ENCODE measurements at regions of chrX and their contacts with region 1.

Region 1: DNA sequence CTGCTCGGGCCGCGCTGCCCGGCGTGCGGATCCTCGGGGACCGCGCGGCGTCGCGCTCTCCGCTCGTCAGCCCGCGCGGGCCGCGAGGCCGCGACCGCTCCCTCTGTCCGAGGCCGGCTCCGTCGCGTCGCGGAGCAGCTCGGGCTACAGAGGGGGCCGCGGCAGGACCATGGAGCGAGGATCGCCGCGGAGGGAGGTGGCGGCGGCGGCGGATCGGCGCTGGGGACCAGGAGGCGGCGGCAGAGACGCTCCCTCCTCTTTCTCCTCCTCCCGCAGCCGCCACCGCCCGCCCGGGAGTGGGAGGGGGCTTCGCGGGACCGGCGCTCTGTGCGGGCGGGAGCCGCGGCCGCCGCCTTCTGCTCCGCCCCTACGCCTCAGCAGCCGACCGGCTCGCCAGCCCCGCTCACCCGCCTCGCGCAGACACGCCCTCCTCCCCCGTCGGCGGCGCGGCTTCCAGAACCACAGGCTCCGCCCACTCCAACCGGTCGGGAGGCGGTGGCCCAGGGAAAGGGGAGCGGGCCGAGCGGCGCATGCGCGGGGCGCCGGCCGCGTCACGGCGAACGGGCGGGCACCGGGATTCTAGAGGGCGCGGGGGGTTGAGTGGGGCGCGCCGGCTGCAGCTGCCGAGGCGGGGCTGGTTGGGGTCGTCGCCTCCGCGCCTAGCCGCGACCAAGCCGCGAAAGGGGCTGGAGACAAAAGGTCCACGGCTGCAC is at the start of gene CASK:
- DNase-seq: peak; percentile 97
- H3K4me3 Mint-ChIP-seq: peak within 1 kb of the TSS; percentile 88
- H3K27ac Mint-ChIP-seq: peak within 1 kb of the TSS; percentile 84
- H3K4me1 Mint-ChIP-seq: peaks cover 25% of the 10 kb centered on the region
- H3K27me3 Mint-ChIP-seq: peaks cover 2% of the 10 kb centered on the region
- total RNA-seq, gene CASK: 16.4 and 19.3 TPM in 2 replicates

Region 2: DNA sequence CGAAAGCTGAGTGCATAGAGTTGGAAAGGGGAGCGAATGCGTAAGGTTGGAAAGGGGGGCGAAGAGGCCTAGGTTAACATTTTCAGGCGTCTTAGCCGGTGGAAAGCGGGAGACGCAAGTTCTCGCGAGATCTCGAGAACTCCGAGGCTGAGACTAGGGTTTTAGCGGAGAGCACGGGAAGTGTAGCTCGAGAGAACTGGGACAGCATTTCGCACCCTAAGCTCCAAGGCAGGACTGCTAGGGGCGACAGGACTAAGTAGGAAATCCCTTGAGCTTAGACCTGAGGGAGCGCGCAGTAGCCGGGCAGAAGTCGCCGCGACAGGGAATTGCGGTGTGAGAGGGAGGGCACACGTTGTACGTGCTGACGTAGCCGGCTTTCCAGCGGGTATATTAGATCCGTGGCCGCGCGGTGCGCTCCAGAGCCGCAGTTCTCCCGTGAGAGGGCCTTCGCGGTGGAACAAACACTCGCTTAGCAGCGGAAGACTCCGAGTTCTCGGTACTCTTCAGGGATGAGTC is 589.6 kb before region 1 on chrX and contains the start of gene DDX3X:
- intact Hi-C with region 1: loop called (anchors 5 kb)
- DNase-seq: peak; percentile 95
- H3K4me3 Mint-ChIP-seq: peak within 1 kb of the TSS; percentile 98
- H3K27ac Mint-ChIP-seq: peak within 1 kb of the TSS; percentile 100
- H3K4me1 Mint-ChIP-seq: peaks cover 25% of the 10 kb centered on the region
- H3K27me3 Mint-ChIP-seq: no peaks in the 10 kb centered on the region
- total RNA-seq, gene DDX3X: 307 and 313 TPM in 2 replicates

Region 3: GRCh38 chrX:41664307-41665299 is 258.8 kb before region 1 on chrX:
- intact Hi-C with region 1: loop called (anchors 2 kb)
- DNase-seq: peak; percentile 55
- H3K4me3 Mint-ChIP-seq: peak overlapping the region; percentile 6
- H3K27ac Mint-ChIP-seq: peak overlapping the region; percentile 53
- H3K4me1 Mint-ChIP-seq: peaks cover 34% of the 10 kb centered on the region
- H3K27me3 Mint-ChIP-seq: no peaks in the 10 kb centered on the region

Region 4: GRCh38 chrX:41906515-41907165 is 16.8 kb before region 1 on chrX:
- intact Hi-C with region 1: loop called (anchors 2 kb)
- DNase-seq: no peak
- H3K4me3 Mint-ChIP-seq: no peak overlapping the region
- H3K27ac Mint-ChIP-seq: peak overlapping the region; percentile 65
- H3K4me1 Mint-ChIP-seq: peaks cover 18% of the 10 kb centered on the region
- H3K27me3 Mint-ChIP-seq: no peaks in the 10 kb centered on the region

Region 5: DNA sequence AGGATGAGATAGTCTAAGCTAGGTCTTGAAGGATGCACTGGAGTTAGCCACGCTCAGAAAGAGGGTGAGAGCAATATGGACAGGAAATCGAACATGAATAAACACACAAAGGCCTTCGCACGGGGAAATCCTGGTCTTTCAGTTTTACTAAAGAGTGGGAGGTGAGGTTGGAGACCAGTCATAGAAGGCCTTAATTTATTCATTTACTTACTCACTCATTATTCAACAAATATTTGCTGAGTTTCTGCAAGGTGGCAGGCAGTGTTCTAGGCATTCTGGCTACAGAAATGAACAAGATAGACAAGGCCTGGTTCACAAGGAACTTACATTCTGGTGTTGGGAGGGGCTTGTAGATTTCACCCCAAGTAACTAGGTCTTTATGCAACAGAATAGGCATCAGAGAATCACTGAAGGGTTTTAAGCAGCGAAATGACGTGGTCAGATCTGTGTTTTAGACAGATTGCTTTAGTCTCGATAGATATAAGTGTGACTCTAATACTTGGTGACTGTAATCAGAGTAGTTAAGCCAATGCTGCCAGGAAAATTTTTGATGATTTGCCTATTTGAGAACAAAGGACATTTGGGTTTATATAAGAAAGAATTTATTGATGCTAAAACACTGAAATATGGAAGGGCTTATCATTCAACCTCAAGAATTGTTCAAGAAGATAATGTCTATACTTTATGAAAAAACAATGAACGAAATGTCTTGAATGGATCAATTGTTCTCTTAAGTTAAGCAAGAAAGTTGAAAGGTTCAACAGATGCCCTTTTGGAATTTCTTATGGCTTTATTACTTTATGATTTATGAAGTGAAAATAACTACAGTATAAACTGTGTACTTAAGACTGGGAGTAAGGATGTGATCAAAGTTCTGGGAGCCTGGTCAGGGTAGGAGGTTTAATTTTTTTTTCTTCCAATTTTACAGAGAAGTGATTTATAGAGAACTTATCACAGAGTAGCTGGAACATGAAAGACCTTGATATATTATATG is 184.4 kb after region 1 on chrX:
- intact Hi-C with region 1: loop called (anchors 5 kb)
- DNase-seq: peak; percentile 55
- H3K4me3 Mint-ChIP-seq: no peak overlapping the region
- H3K27ac Mint-ChIP-seq: peak overlapping the region; percentile 67
- H3K4me1 Mint-ChIP-seq: peaks cover 20% of the 10 kb centered on the region
- H3K27me3 Mint-ChIP-seq: no peaks in the 10 kb centered on the region

Region 6: DNA sequence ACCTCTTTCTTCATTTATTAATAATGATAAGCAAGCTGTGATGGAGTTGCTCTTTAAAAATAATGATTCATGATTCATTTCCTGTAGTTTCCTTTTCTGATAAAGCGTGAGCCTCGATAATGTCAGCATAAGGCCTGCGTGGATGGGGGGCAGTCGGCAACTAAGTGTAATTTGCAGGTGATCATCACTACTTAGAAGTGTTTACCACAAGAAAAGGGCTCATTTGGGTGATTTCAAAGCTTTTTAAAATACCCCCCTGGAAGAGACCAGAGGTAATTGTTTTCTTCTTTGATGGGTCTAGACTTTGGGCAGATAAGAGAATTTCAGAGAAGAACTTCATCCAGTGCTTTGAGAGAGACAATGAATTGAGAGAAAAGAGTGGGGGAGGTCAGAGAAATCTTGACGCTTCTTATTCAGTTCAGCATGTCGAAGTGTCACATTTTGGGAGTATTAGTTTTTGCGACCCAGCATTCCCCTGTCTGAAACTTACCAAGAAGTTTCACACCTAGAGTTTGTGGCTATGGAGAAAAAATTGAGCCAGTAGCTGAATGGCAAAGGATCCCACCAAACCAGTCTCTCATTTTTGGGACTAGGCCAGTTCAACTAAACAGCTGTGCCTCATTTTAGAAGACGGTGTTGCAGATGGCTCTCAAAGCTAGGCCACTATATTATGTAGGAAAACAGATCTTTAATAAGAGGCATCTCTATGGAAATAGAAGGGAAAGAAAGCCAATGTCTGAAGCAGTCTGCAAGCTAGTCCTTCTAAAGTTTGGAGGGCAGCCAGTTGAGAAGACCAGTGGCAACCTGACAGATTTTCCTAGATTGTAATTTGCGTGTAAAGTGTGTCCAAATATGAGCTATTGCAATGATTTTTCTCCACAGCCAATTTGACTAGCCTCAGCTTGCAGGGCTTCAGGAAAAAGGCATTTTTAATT is 1025.6 kb after region 1 on chrX:
- intact Hi-C with region 1: loop called (anchors 5 kb)
- DNase-seq: no peak
- H3K4me3 Mint-ChIP-seq: no peak overlapping the region
- H3K27ac Mint-ChIP-seq: no peak overlapping the region
- H3K4me1 Mint-ChIP-seq: peaks cover 34% of the 10 kb centered on the region
- H3K27me3 Mint-ChIP-seq: no peaks in the 10 kb centered on the region